ENCODE measurements at regions of chr3 and their contacts with region 1.

Region 1: GRCh38 chr3:25573386-25574171 is 91.1 kb downstream of the TOP2B start:
- DNase-seq: no peak
- H3K4me3 ChIP-seq: peak overlapping the region; percentile 33
- CTCF ChIP-seq: no peak

Region 2: GRCh38 chr3:25427942-25428788 is 145.4 kb before region 1 on chr3 and contains the start of gene RARB:
- CTCF ChIA-PET with region 1: no interaction called
- POLR2A ChIA-PET with region 1: interaction called, 14 read pairs
- DNase-seq: peak; percentile 78
- H3K4me3 ChIP-seq: peak within 1 kb of the TSS; percentile 73
- CTCF ChIP-seq: no peak

Measured in AG04449 (cell line).